Testis (tissue), 5 donors: ENCODE measurements at regions of chr1 and their contacts with region 1.

Region 1: GRCh38 chr1:56831871-56832693 is 12.9 kb upstream of the FYB2 start:
- DNase-seq: peak; percentile 82
- H3K4me3 ChIP-seq: no peak overlapping the region
- H3K27ac ChIP-seq: no peak overlapping the region
- H3K4me1 ChIP-seq: no peaks in the 10 kb centered on the region
- H3K27me3 ChIP-seq: no peaks in the 10 kb centered on the region
- CTCF ChIP-seq: peak; percentile 89 to 99 (median 93)
- POLR2A ChIP-seq: no peak

Region 2: DNA sequence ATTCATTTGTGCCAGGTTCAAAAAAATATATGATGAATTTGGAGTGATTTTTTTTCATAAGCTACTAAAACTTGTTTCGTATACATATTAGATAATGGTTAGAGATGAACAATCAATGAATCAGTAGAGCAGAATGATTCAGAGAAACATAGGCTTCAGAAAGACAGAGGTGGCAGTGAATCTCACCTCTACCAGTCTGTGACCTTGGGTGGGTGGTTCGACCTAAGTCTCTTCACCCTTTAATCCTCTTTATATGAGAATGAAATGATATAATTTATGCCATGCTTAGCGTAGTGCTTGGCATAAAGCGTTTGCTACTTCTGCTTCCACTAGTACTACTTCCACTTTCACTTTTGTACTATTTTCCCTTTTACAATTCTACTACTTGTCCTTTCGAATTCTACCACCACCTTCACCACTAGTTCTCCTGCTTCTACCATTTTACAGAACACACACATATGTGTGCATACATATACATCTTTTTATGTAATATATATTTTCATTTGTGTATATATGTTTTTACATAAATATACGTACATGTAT is 57.9 kb before region 1 on chr1:
- intact Hi-C with region 1: no loop called
- DNase-seq: no peak
- H3K4me3 ChIP-seq: no peak overlapping the region
- H3K27ac ChIP-seq: no peak overlapping the region
- H3K4me1 ChIP-seq: no peaks in the 10 kb centered on the region
- H3K27me3 ChIP-seq: no peaks in the 10 kb centered on the region
- CTCF ChIP-seq: no peak
- POLR2A ChIP-seq: no peak

Region 3: GRCh38 chr1:58155418-58156123 is 1323.5 kb after region 1 on chr1:
- intact Hi-C with region 1: loop called (anchors 10 kb)
- DNase-seq: peak; percentile 61
- H3K4me3 ChIP-seq: no peak overlapping the region
- H3K27ac ChIP-seq: no peak overlapping the region
- H3K4me1 ChIP-seq: no peaks in the 10 kb centered on the region
- H3K27me3 ChIP-seq: no peaks in the 10 kb centered on the region
- CTCF ChIP-seq: peak in 2 of 3 experiments; percentile 39 to 41
- POLR2A ChIP-seq: no peak